Activated naive CD8-positive, alpha-beta T cell treated with anti-CD3 and anti-CD28 coated beads, Interleukin-2, amount 10 ng/mL, durations not matched to agents 7 days and 5 days (primary cell): ENCODE measurements at regions of chr12 and their contacts with region 1.

Region 1: GRCh38 chr12:6851921-6852650 is at the start of gene USP5:
- DNase-seq: peak; percentile 94
- ATAC-seq: peak; percentile 79
- H3K4me3 Mint-ChIP-seq: peak within 1 kb of the TSS; percentile 96
- H3K27ac Mint-ChIP-seq: peak within 1 kb of the TSS; percentile 99
- H3K4me1 Mint-ChIP-seq: peaks cover 37% of the 10 kb centered on the region
- H3K27me3 Mint-ChIP-seq: no peaks in the 10 kb centered on the region
- total RNA-seq, gene USP5: 84.8 to 95.4 TPM

Region 2: DNA sequence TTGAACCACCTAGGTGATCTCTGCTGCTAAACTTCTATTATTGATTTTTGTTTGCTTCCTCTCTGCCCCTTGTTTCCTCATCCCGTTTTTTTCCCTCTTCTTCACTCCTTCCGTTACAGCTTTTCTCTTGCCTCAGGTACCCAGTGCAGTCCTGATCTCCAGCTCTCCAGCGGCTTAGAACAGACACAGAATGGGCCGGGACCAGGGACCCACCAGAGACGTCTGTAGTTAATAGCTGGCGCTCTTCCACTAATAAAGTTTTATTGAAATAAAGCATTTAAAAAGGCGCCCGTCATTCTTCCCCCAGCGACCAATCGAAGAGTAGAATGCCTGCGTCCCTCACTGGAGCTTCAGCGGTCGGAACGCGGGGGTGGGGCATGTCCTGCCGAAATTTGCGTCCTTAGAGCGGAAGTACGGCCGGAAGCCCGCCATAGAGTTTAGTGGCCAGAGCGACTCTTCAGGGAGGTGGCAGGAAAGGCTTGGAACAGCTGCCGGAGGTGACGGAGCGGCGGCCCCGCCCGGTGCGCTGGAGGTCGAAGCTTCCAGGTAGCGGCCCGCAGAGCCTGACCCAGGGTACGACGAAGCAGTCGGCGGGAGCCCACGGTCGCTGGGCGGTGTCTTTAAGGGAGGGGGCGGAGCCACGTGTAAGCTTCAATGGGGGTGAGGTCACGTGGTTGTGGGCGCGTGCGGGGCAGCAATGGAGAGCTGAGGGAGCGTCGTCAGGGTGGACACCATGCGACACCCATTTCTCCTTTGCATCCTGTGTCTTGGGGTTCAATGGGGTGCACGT is 128.3 kb before region 1 on chr12 and contains the start of gene COPS7A:
- POLR2A ChIA-PET with region 1: interaction called, 13 read pairs
- DNase-seq: peak; percentile 93
- ATAC-seq: peak; percentile 97
- H3K4me3 Mint-ChIP-seq: peak within 1 kb of the TSS; percentile 99
- H3K27ac Mint-ChIP-seq: peak within 1 kb of the TSS; percentile 99
- H3K4me1 Mint-ChIP-seq: peaks cover 22% of the 10 kb centered on the region
- H3K27me3 Mint-ChIP-seq: peaks cover 3% of the 10 kb centered on the region
- total RNA-seq, gene COPS7A: 29.8 to 35.6 TPM

Region 3: GRCh38 chr12:6772331-6772695 is 79.8 kb before region 1 on chr12 and contains the start of gene LAG3:
- POLR2A ChIA-PET with region 1: interaction called, 14 read pairs
- DNase-seq: peak; percentile 59
- ATAC-seq: peak; percentile 35
- H3K4me3 Mint-ChIP-seq: peak within 1 kb of the TSS; percentile 88
- H3K27ac Mint-ChIP-seq: peak within 1 kb of the TSS; percentile 98
- H3K4me1 Mint-ChIP-seq: peaks cover 56% of the 10 kb centered on the region
- H3K27me3 Mint-ChIP-seq: peaks cover 9% of the 10 kb centered on the region
- total RNA-seq, gene LAG3: 46.6 to 52.1 TPM

Region 4: DNA sequence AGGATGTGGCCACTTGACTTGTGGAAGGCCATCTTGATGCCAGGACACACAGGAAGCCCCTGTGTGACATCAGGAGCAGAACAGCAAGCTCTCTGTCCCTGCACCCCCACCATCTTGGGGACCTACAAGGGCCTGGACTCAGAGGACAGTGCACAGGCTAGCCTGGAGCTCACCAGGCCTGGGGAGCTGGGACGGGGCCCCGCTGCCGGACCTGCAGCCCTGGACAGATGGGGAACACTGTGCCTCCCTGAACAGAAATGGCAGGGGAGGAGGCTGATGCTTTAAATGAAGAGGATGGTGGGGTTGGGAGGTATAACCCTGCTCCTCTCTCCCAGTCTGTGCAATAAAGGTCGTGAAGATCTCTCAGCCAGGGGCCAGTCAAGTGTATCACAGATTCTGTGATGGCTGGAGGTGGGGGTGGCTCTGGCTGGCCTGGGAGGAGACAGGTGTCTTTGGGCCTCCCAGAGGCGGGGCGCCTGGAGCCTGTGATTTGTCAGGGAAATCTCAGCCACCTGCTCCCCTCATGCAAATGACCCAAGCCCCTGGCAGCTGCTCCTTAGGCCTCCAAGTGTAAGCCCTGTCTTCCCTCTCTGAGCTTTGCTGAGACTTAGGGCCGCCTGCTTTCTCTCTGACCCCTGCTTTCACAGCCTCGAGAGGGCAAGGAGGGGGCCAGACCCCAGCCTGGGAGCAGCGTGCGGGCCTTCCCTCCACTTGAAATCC is 12.4 kb before region 1 on chr12:
- POLR2A ChIA-PET with region 1: interaction called, 20 read pairs
- DNase-seq: no peak
- ATAC-seq: no peak
- H3K4me3 Mint-ChIP-seq: no peak overlapping the region
- H3K27ac Mint-ChIP-seq: no peak overlapping the region
- H3K4me1 Mint-ChIP-seq: peaks cover 7% of the 10 kb centered on the region
- H3K27me3 Mint-ChIP-seq: peaks cover 2% of the 10 kb centered on the region

Region 5: DNA sequence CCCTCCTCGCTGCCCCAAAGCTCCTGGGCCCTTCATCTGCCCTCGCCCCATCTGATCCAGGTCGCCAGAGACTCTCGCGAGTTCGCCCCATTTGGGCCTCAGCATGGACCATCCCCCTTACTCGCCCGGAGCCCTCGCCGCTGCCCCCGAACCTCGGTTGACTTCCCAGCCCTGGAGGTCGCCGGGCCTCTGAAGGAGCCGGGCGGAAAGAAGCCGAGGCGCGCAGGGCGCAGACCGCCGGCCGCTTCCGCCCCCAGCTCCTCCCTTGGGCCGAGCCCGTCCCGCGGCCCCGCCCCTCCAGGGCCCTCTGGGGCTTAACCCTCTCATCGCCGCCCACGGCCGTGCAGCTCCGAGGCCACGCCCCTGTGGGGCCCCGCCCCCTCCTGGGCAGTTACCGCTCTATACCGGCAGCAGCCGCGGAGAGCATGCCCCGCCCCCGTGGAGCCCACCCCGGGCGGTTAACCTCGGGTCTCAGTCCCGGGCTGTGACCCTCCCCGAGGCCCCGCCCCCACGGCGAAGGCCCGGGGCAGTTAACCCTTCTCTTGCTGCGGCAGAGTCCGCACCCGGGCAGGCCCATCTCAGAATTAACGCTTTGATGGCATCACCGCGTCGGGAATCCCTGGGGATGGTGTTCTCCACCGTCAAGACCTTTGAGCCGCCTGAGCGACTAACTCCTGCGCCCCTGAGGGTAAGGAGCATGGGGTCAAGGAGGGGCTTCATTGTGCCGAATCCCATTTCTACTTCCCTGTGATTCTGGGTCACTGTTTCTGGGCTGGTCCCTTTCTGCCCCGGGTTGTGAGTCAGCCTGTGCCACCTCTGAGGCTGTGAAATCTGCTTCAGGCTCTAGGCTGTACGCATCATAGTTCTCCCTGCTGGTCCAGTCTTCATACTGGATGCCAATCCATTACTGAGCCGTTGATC is 21.3 kb after region 1 on chr12 and contains the start of gene SPSB2:
- POLR2A ChIA-PET with region 1: interaction called, 106 read pairs
- DNase-seq: peak; percentile 100
- ATAC-seq: peak; percentile 78
- H3K4me3 Mint-ChIP-seq: peak within 1 kb of the TSS; percentile 94
- H3K27ac Mint-ChIP-seq: peak within 1 kb of the TSS; percentile 93
- H3K4me1 Mint-ChIP-seq: peaks cover 48% of the 10 kb centered on the region
- H3K27me3 Mint-ChIP-seq: no peaks in the 10 kb centered on the region
- total RNA-seq, gene SPSB2: 16.4 to 17.0 TPM

Region 6: GRCh38 chr12:6937481-6938297 is 85.6 kb after region 1 on chr12:
- POLR2A ChIA-PET with region 1: interaction called, 21 read pairs
- DNase-seq: peak; percentile 90
- ATAC-seq: peak; percentile 92
- H3K4me3 Mint-ChIP-seq: peak overlapping the region; percentile 95
- H3K27ac Mint-ChIP-seq: peak overlapping the region; percentile 99
- H3K4me1 Mint-ChIP-seq: peaks cover 44% of the 10 kb centered on the region
- H3K27me3 Mint-ChIP-seq: no peaks in the 10 kb centered on the region

Region 7: GRCh38 chr12:6953442-6954315 is 101.6 kb after region 1 on chr12:
- POLR2A ChIA-PET with region 1: interaction called, 11 read pairs
- DNase-seq: peak; percentile 78
- ATAC-seq: peak; percentile 23
- H3K4me3 Mint-ChIP-seq: peak overlapping the region; percentile 100
- H3K27ac Mint-ChIP-seq: peak overlapping the region; percentile 100
- H3K4me1 Mint-ChIP-seq: peaks cover 72% of the 10 kb centered on the region
- H3K27me3 Mint-ChIP-seq: no peaks in the 10 kb centered on the region